HCT116 (cell line): ENCODE measurements at regions of chr17 and their contacts with region 1.

Region 1: GRCh38 chr17:74296548-74296936 is 22.5 kb downstream of the DNAI2 start:
- DNase-seq: peak; percentile 57
- ATAC-seq: peak; percentile 80
- H3K4me3 ChIP-seq: no peak overlapping the region
- H3K27ac ChIP-seq: no peak overlapping the region
- H3K4me1 ChIP-seq: peaks cover 0 to 16% of the 10 kb centered on the region in 2 experiments; a peak in 3 of 4 replicates
- H3K27me3 ChIP-seq: no peaks in the 10 kb centered on the region
- CTCF ChIP-seq: peak; percentile 75 to 82 (median 76); a peak in 5 of 6 replicates
- POLR2A ChIP-seq: no peak
- RAD21 ChIP-seq: peak; percentile 54

Region 2: GRCh38 chr17:74212913-74213791 is 83.4 kb before region 1 on chr17 and contains the start of gene TTYH2:
- CTCF ChIA-PET with region 1: interaction called, 4 read pairs
- POLR2A ChIA-PET with region 1: interaction called, 8 read pairs
- RAD21 ChIA-PET with region 1: no interaction called
- intact Hi-C with region 1: loop called (anchors 1 kb)
- DNase-seq: peak; percentile 81
- ATAC-seq: peak; percentile 74
- H3K4me3 ChIP-seq: peak within 1 kb of the TSS; percentile 75 to 77
- H3K27ac ChIP-seq: peak within 1 kb of the TSS; percentile 76
- H3K4me1 ChIP-seq: peaks cover 25 to 57% of the 10 kb centered on the region in 2 experiments
- H3K27me3 ChIP-seq: no peaks in the 10 kb centered on the region
- CTCF ChIP-seq: peak in 2 of 3 experiments; percentile 46 to 51; a peak in 4 of 6 replicates
- POLR2A ChIP-seq: peak; percentile 50
- RAD21 ChIP-seq: no peak
- total RNA-seq, gene TTYH2: 10.8 TPM

Region 3: DNA sequence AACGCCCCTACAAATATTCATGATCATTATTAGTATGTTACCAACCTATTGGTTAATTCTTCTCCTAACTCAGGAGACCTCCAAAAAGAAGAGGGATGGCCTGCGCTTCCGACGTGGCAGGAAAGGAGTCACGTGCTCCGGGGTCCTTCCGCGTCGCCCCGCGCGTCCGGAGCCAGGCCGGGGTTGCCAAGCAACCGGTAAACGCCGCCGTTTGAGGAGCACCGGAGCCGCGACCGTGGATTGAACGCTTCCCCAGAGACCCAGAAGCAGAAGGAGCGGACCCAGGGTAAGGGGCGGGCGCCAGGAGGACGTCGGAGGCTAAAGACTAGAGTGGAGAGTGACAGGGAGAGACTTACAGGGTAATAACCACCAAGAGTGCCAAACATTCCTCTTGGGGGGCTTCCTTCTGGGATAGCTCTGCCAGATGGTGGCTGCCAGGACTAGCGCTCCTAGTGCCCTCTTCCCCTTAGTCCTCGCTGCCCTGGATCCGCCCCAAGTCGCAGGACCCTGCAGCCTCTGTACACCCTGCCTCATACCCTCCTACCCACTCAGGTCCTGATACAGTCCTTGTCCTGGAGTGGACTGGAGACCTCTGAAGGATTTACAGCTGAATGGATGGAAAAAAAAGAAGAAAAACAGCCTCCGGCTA is 22.4 kb before region 1 on chr17 and contains the start of gene DNAI2:
- CTCF ChIA-PET with region 1: no interaction called
- POLR2A ChIA-PET with region 1: no interaction called
- RAD21 ChIA-PET with region 1: no interaction called
- intact Hi-C with region 1: no loop called
- DNase-seq: no peak
- ATAC-seq: no peak
- H3K4me3 ChIP-seq: no peak within 1 kb of the TSS
- H3K27ac ChIP-seq: no peak within 1 kb of the TSS
- H3K4me1 ChIP-seq: no peaks in the 10 kb centered on the region
- H3K27me3 ChIP-seq: 0 out of 2 replicates have a peak, but pooled peaks cover 3% of the 10 kb centered on the region
- CTCF ChIP-seq: no peak
- POLR2A ChIP-seq: no peak
- RAD21 ChIP-seq: no peak
- total RNA-seq, gene DNAI2: not detected

Region 4: GRCh38 chr17:74343526-74344284 is 47.2 kb after region 1 on chr17:
- CTCF ChIA-PET with region 1: no interaction called
- POLR2A ChIA-PET with region 1: no interaction called
- RAD21 ChIA-PET with region 1: no interaction called
- intact Hi-C with region 1: no loop called
- DNase-seq: no peak
- ATAC-seq: no peak
- H3K4me3 ChIP-seq: no peak overlapping the region
- H3K27ac ChIP-seq: no peak overlapping the region
- H3K4me1 ChIP-seq: peaks cover 0 to 8% of the 10 kb centered on the region in 2 experiments; a peak in 2 of 4 replicates
- H3K27me3 ChIP-seq: no peaks in the 10 kb centered on the region; the same call in 1 of the 2 replicates
- CTCF ChIP-seq: no peak
- POLR2A ChIP-seq: no peak
- RAD21 ChIP-seq: no peak

Region 5: GRCh38 chr17:74354123-74354522 is 57.6 kb after region 1 on chr17:
- CTCF ChIA-PET with region 1: interaction called, 13 read pairs
- POLR2A ChIA-PET with region 1: no interaction called
- RAD21 ChIA-PET with region 1: no interaction called
- intact Hi-C with region 1: loop called (anchors 1 kb)
- DNase-seq: peak; percentile 74
- ATAC-seq: peak; percentile 98
- H3K4me3 ChIP-seq: peak overlapping the region; percentile 19 to 33; a peak in 3 of 4 replicates
- H3K27ac ChIP-seq: no peak overlapping the region; the same call in 1 of the 2 replicates
- H3K4me1 ChIP-seq: peaks cover 7 to 14% of the 10 kb centered on the region in 2 experiments; a peak in 3 of 4 replicates
- H3K27me3 ChIP-seq: no peaks in the 10 kb centered on the region
- CTCF ChIP-seq: peak; percentile 100
- POLR2A ChIP-seq: no peak
- RAD21 ChIP-seq: peak; percentile 75

Region 6: DNA sequence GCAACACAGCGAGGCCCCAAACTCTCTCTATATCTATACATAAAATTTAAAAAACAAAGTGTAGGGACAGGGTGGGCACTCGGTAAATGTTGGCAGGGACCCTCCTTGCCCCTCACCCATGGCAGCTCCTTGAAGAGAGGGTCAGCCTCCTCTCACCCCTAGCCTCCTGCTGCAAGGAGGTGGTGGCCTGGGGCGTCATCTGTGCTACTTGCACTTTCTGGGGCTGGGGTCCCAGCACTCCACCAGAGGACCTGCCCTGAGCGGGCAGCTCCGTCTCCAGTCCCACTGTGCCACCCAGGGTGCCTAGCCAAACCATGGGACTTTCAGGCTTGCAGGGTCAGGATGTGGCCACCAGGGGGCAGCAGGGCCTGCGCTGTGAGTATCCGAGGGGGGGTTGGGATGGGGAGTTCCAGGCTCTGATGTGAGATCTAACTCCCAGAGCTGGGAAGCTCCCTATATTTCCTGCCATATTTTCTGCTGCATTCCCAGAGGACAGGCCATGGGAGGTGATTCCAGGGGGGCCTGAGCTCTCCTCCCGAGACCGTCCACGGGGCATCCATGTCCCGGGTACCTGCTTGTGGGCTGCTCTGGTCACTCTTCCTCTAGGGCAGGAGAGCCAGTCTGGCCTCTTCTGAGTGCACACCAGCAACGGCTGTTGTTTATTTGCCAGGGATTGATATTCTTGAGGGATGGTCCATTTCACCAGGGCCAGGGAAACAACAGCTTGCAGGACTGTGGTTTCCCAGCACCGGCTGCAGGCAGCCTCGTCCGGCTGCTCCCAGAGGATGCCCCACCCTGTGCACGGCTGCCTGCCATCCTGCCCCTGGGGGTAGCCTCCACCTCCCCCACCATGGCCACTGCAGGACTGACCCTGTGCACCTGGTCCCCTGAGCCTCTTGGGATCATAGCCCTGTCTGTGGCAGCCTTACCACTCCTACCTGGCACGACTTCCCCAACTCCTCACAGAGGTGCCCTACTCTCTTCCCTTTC is 71.8 kb after region 1 on chr17:
- CTCF ChIA-PET with region 1: interaction called, 27 read pairs
- POLR2A ChIA-PET with region 1: no interaction called
- RAD21 ChIA-PET with region 1: interaction called in 1 of 2 experiments, 4 read pairs
- intact Hi-C with region 1: no loop called
- DNase-seq: peak; percentile 67
- ATAC-seq: peak; percentile 95
- H3K4me3 ChIP-seq: no peak overlapping the region
- H3K27ac ChIP-seq: no peak overlapping the region
- H3K4me1 ChIP-seq: peaks cover 2 to 13% of the 10 kb centered on the region in 2 experiments; a peak in 2 of 4 replicates
- H3K27me3 ChIP-seq: no peaks in the 10 kb centered on the region
- CTCF ChIP-seq: peak; percentile 96 to 100 (median 99)
- POLR2A ChIP-seq: no peak
- RAD21 ChIP-seq: peak; percentile 94

Region 7: DNA sequence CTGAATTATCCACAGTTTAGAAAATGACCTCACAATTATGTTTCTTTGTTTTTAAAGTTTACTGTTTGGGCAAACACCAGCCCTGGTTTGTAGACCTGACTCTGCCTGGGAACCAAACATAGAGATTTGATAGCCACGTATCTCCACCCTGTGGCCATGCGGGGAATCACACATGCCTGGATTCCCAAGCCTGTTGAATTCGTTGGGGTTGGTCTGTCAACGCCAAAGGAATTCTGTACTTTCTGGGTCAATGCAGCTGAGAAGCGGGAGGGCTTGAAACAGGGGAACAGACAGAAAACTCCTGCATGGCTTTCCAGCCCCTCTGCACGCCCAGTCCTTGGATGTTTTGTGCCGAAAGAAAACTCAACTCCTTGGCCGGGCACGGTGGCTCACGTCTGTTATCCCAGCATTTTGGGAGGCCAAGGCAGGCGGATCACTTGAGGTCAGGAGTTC is 196.9 kb after region 1 on chr17:
- CTCF ChIA-PET with region 1: interaction called, 3 read pairs
- POLR2A ChIA-PET with region 1: no interaction called
- RAD21 ChIA-PET with region 1: no interaction called
- intact Hi-C with region 1: loop called (anchors 1 kb)
- DNase-seq: peak; percentile 73
- ATAC-seq: peak; percentile 98
- H3K4me3 ChIP-seq: no peak overlapping the region
- H3K27ac ChIP-seq: no peak overlapping the region
- H3K4me1 ChIP-seq: no peaks in the 10 kb centered on the region
- H3K27me3 ChIP-seq: no peaks in the 10 kb centered on the region
- CTCF ChIP-seq: peak; percentile 97 to 99 (median 97)
- POLR2A ChIP-seq: no peak
- RAD21 ChIP-seq: peak; percentile 97

Region 8: GRCh38 chr17:74916136-74916850 is 619.8 kb after region 1 on chr17:
- CTCF ChIA-PET with region 1: no interaction called
- POLR2A ChIA-PET with region 1: no interaction called
- RAD21 ChIA-PET with region 1: no interaction called
- intact Hi-C with region 1: no loop called
- DNase-seq: no peak
- ATAC-seq: no peak
- H3K4me3 ChIP-seq: no peak overlapping the region
- H3K27ac ChIP-seq: peak overlapping the region; percentile 25; the same call in 1 of the 2 replicates
- H3K4me1 ChIP-seq: peaks cover 7 to 9% of the 10 kb centered on the region in 2 experiments; a peak in 3 of 4 replicates
- H3K27me3 ChIP-seq: no peaks in the 10 kb centered on the region
- CTCF ChIP-seq: no peak
- POLR2A ChIP-seq: no peak
- RAD21 ChIP-seq: no peak